ENCODE measurements at regions of chr11 and their contacts with region 1.

Region 1: DNA sequence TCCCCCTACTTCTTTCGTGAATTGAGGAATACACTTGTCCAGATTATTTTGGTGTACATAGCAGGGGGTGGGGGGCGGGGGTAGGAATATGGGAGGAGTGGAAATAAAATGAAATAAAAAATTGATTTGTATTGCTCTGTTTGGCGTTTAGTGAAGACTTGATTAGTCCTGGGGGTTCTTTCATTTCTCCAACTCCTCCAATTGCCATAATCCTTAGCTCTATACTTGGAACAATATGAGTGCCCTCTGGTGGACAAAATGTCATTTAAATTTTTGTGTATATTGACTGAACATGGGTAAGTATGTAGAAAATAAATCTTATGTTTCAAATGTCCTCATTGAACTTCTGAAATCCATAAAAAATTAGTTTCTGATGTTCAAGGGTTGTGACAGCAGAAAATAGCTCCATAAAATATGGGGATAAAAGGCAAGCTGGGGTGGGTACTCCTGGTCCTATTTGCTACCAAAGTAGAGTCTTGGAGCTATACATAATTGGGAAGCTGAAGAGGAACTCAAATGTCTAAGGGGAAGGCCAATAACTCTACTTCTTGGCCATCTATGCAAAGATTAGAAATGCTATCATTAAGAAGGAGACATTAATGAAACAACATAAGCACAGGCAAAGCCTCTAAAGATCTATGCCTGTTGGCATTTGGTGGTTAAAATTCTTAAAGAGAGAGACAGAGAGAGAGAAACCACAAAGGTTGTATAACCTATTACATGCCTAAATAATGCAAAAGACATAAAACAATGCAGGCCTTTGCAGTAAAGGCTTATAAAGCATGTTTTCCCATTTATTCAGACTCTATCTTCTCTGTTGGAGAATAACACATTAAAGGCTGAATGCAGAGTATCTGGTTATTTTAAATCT is 421.6 kb downstream of the METTL15 start:
- DNase-seq: peak; percentile 32
- H3K4me3 ChIP-seq: no peak overlapping the region; a peak in 1 of 4 replicates
- H3K27ac ChIP-seq: no peak overlapping the region
- H3K4me1 ChIP-seq: no peaks in the 10 kb centered on the region
- H3K27me3 ChIP-seq: no peaks in the 10 kb centered on the region
- CTCF ChIP-seq: peak; percentile 54
- EP300 ChIP-seq: no peak
- RAD21 ChIP-seq: peak; percentile 76

Region 2: DNA sequence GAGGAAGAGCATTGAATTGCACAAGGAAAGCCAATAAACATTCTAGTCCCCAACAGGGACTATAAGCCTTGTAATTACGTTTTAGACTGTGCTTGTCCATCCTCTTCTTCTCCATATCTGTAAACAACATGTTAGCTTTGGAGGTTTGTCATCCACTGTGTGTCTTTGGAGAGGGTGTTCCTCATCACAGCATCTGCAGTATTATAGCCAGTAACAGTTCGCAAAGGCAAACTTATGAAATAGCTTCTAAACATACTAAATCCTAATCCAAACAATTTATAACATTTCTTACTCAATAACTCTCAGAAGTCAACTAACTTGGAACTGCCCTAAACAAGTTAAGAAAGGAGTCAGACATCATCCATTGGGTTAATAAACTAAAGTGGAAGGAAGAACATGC is 819.2 kb before region 1 on chr11:
- CTCF ChIA-PET with region 1: interaction called, 31 read pairs
- POLR2A ChIA-PET with region 1: no interaction called
- DNase-seq: no peak
- H3K4me3 ChIP-seq: no peak overlapping the region
- H3K27ac ChIP-seq: no peak overlapping the region
- H3K4me1 ChIP-seq: no peaks in the 10 kb centered on the region
- H3K27me3 ChIP-seq: no peaks in the 10 kb centered on the region
- CTCF ChIP-seq: no peak
- EP300 ChIP-seq: no peak
- RAD21 ChIP-seq: no peak

Region 3: GRCh38 chr11:27839226-27839870 is 690.4 kb before region 1 on chr11:
- CTCF ChIA-PET with region 1: interaction called, 14 read pairs
- POLR2A ChIA-PET with region 1: no interaction called
- DNase-seq: no peak
- H3K4me3 ChIP-seq: no peak overlapping the region
- H3K27ac ChIP-seq: no peak overlapping the region
- H3K4me1 ChIP-seq: no peaks in the 10 kb centered on the region
- H3K27me3 ChIP-seq: no peaks in the 10 kb centered on the region
- CTCF ChIP-seq: peak; percentile 53
- EP300 ChIP-seq: no peak
- RAD21 ChIP-seq: peak; percentile 41

Region 4: DNA sequence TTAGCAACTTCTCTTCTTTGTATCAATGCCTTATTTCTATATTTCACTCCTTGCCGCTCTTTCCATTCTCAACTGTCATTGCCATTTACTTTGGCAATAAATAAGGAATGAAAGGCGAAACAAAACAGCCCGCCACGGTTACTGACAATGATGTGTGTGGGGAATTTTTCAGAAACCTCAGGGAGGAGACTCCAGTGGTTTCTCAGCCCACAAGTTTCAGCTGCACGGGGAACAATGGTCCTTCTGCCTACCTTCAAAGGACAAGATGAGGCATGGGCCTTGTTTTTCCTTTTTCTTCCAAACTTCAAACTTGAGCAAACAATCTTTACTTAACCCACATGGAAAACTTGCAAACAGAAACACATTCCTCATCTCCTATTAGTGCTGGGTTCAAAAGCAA is 12.2 kb before region 1 on chr11:
- CTCF ChIA-PET with region 1: interaction called, 11 read pairs
- POLR2A ChIA-PET with region 1: no interaction called
- DNase-seq: no peak
- H3K4me3 ChIP-seq: no peak overlapping the region
- H3K27ac ChIP-seq: no peak overlapping the region
- H3K4me1 ChIP-seq: no peaks in the 10 kb centered on the region
- H3K27me3 ChIP-seq: no peaks in the 10 kb centered on the region
- CTCF ChIP-seq: no peak
- EP300 ChIP-seq: no peak
- RAD21 ChIP-seq: no peak

Region 5: GRCh38 chr11:28690746-28691145 is 161.0 kb after region 1 on chr11:
- CTCF ChIA-PET with region 1: no interaction called
- POLR2A ChIA-PET with region 1: no interaction called
- DNase-seq: no peak
- H3K4me3 ChIP-seq: no peak overlapping the region
- H3K27ac ChIP-seq: no peak overlapping the region
- H3K4me1 ChIP-seq: 0 out of 4 replicates have a peak, but pooled peaks cover 0 to 2% of the 10 kb centered on the region in 2 experiments
- H3K27me3 ChIP-seq: no peaks in the 10 kb centered on the region
- CTCF ChIP-seq: no peak
- EP300 ChIP-seq: no peak
- RAD21 ChIP-seq: no peak

Region 6: GRCh38 chr11:28924007-28924406 is 394.2 kb after region 1 on chr11:
- CTCF ChIA-PET with region 1: no interaction called
- POLR2A ChIA-PET with region 1: no interaction called
- DNase-seq: no peak
- H3K4me3 ChIP-seq: no peak overlapping the region
- H3K27ac ChIP-seq: no peak overlapping the region
- H3K4me1 ChIP-seq: no peaks in the 10 kb centered on the region
- H3K27me3 ChIP-seq: no peaks in the 10 kb centered on the region
- CTCF ChIP-seq: no peak
- EP300 ChIP-seq: no peak
- RAD21 ChIP-seq: no peak